SK-N-SH (cell line): ENCODE measurements at regions of chr18 and their contacts with region 1.

Region 1: DNA sequence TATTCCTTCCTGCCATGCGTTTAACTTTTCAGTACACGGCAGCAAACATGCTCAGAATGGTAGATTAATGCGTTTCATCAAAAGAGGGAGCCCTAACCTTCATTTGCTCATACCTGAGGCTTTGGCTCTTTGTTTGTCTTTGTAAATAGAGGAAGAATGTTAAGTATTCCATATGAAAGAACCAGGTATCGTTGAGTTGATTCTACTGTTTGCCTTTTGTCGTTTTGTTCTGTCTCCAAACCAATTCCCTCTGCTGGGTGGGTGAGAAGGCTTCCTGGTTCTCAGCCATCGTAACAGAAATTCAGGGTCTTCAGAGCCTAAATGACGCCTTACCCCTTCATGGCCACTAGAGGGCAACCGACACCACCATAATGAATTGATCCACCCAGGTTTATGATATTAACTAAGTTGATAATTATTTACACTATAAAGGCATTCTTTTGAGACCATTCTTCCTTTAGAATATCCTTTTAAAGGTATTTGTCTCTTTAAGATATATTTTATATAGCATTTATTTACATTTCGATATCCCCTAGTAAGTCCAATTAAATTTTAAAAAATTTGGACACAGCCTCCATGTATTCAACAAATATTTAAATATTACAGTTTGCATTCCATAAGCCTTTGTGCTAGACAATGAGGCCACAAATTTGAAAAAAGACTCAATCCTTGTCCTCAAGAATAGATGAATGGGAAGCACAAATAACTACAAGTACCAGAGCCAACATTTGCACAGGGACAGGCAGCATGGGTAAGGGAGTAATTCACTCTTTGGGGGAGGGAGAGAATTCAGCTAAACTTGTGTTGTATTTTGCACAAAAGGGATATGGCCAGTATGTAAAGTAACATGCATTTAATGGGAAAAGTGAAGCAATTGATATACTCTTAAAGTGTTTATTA is 48.1 kb downstream of the TIMM21 start:
- DNase-seq: peak; percentile 87
- H3K4me3 ChIP-seq: peak overlapping the region; percentile 34 to 48; a peak in 2 of 4 replicates
- H3K27ac ChIP-seq: no peak overlapping the region
- H3K4me1 ChIP-seq: peaks cover 0 to 11% of the 10 kb centered on the region in 2 experiments; a peak in 1 of 4 replicates
- H3K27me3 ChIP-seq: peaks cover 46% of the 10 kb centered on the region
- CTCF ChIP-seq: peak; percentile 95
- EP300 ChIP-seq: no peak
- RAD21 ChIP-seq: peak; percentile 87

Region 2: DNA sequence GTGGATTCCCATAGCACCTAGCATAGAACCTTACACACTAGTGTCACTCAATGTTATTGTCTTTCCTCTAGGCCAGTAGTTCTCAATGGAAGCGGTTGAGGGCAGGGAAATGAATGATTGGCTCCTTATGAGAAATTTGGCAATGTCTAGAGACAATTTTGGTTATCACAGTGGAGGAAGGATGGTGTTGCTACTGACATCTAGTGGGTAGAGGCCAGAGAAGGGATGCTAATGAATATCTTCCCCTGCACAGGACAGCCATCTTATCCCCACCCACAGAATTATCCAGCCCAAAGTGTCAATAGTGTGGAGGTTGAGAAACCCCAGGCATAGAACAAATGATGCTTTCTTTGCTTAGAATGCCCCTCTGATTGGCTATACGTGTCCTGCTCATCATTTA is 134.9 kb after region 1 on chr18:
- CTCF ChIA-PET with region 1: interaction called, 12 read pairs
- POLR2A ChIA-PET with region 1: no interaction called
- DNase-seq: peak; percentile 33
- H3K4me3 ChIP-seq: peak overlapping the region in 1 of 2 experiments; percentile 20; a peak in 1 of 4 replicates
- H3K27ac ChIP-seq: no peak overlapping the region
- H3K4me1 ChIP-seq: no peaks in the 10 kb centered on the region
- H3K27me3 ChIP-seq: no peaks in the 10 kb centered on the region
- CTCF ChIP-seq: peak; percentile 36
- EP300 ChIP-seq: no peak
- RAD21 ChIP-seq: peak; percentile 66

Region 3: GRCh38 chr18:74337155-74337911 is 140.9 kb after region 1 on chr18:
- CTCF ChIA-PET with region 1: interaction called, 91 read pairs
- POLR2A ChIA-PET with region 1: no interaction called
- DNase-seq: no peak
- H3K4me3 ChIP-seq: no peak overlapping the region
- H3K27ac ChIP-seq: no peak overlapping the region
- H3K4me1 ChIP-seq: no peaks in the 10 kb centered on the region
- H3K27me3 ChIP-seq: peaks cover 6% of the 10 kb centered on the region; the same call in 1 of the 2 replicates
- CTCF ChIP-seq: no peak
- EP300 ChIP-seq: no peak
- RAD21 ChIP-seq: no peak

Region 4: DNA sequence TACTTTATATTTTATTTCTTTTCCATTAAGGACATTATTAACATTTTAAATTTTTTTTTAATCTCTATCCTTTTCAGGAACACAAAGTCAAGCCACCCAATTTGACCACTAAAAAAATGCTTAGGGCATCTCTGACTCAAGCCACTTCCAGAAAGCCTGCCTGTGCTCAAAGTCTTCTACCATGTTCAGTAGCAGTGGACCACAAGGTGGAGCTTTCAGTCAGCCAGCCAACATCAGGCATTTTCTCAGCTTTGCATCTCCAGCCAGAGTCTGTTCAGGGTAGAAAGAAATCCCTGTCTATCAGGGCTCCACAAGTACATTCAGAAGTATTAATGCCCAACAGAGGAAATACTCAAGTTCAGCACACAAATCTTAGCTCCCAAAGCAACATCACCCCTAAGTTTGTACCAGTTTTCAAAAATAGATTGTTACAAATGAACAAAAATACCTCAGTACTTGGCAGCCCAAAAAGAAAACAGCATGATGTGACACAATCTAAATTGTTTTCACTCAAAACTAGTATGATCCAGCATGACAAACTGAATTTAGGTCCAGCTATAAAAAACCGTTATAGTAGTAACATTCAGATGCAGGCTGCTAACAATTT is 156.8 kb after region 1 on chr18:
- CTCF ChIA-PET with region 1: interaction called, 11 read pairs
- POLR2A ChIA-PET with region 1: no interaction called
- DNase-seq: peak; percentile 35
- H3K4me3 ChIP-seq: no peak overlapping the region
- H3K27ac ChIP-seq: no peak overlapping the region
- H3K4me1 ChIP-seq: no peaks in the 10 kb centered on the region
- H3K27me3 ChIP-seq: peaks cover 11% of the 10 kb centered on the region
- CTCF ChIP-seq: peak; percentile 62
- EP300 ChIP-seq: no peak
- RAD21 ChIP-seq: peak; percentile 75

Region 5: DNA sequence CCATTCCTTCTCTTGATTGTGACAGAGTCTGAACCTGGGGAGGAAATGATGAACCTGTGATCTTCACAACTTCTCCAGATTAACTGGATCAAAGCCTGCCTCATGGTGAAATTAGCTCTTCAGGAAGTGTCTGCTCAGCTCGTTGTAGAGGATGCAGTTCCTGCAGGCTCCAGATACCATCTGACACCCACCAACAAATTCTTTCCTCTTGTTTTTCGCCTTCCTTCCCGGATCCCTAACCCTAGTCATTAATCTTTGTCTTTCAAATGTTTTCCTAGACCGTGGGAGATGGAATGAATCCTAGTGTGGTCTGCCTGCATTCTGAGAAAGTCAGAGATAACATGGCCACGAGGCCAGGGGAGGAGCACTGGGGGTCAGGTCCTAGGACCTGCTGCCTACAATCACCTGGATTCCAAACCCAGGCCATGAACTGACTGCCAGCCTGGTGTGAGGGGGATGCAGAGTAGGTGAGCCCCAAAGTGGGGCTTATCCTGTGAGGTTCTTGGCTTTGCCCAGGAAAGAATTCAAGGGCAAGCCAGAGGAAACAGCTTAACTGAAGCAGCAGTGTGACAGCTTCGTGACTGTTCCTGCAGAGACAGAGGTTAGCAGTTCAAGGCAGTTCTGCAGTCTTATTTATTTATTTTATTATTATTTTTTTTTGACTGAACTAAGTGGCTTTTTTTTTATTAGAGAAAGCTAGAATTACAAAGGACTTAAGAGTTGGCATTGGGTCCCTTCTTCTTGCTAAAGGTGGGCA is 192.9 kb after region 1 on chr18:
- CTCF ChIA-PET with region 1: no interaction called
- POLR2A ChIA-PET with region 1: no interaction called
- DNase-seq: no peak
- H3K4me3 ChIP-seq: no peak overlapping the region
- H3K27ac ChIP-seq: no peak overlapping the region
- H3K4me1 ChIP-seq: no peaks in the 10 kb centered on the region
- H3K27me3 ChIP-seq: peaks cover 21% of the 10 kb centered on the region; the same call in 1 of the 2 replicates
- CTCF ChIP-seq: no peak
- EP300 ChIP-seq: no peak
- RAD21 ChIP-seq: no peak